Thyroid gland (tissue), 4 donors: ENCODE measurements at regions of chr15 and their contacts with region 1.

Region 1: GRCh38 chr15:77107531-77108355 is 36.8 kb upstream of the TSPAN3 start:
- DNase-seq: peak; percentile 65 to 73
- H3K4me3 ChIP-seq: no peak overlapping the region
- H3K27ac ChIP-seq: peak overlapping the region in 1 of 3 donors; percentile 45
- H3K4me1 ChIP-seq: peaks cover 14 to 25% of the 10 kb centered on the region in 2 donors
- H3K27me3 ChIP-seq: no peaks in the 10 kb centered on the region
- CTCF ChIP-seq: peak in 4 of 6 experiments; percentile 27 to 67 (median 60)
- POLR2A ChIP-seq: no peak

Region 2: GRCh38 chr15:77024271-77025082 is 83.3 kb before region 1 on chr15:
- intact Hi-C with region 1: loop called (anchors 10 kb)
- DNase-seq: peak; percentile 63 to 70
- H3K4me3 ChIP-seq: no peak overlapping the region
- H3K27ac ChIP-seq: no peak overlapping the region
- H3K4me1 ChIP-seq: peaks cover 0 to 9% of the 10 kb centered on the region in 2 donors
- H3K27me3 ChIP-seq: no peaks in the 10 kb centered on the region
- CTCF ChIP-seq: peak; percentile 77 to 97 (median 88)
- POLR2A ChIP-seq: no peak